Gastrocnemius medialis (tissue), 4 donors: ENCODE measurements at regions of chr20 and their contacts with region 1.

Region 1: GRCh38 chr20:44495802-44496481 is 20.3 kb downstream of the TTPAL start:
- DNase-seq: no peak
- ATAC-seq: peak; percentile 76 to 82
- H3K4me3 ChIP-seq: no peak overlapping the region
- H3K27ac ChIP-seq: peak overlapping the region; percentile 82 to 93 (median 91)
- H3K4me1 ChIP-seq: peaks cover 40 to 48% of the 10 kb centered on the region in 2 donors
- H3K27me3 ChIP-seq: no peaks in the 10 kb centered on the region
- CTCF ChIP-seq: no peak
- POLR2A ChIP-seq: no peak

Region 2: GRCh38 chr20:44481719-44482416 is 14.1 kb before region 1 on chr20:
- in situ Hi-C with region 1: no loop called
- intact Hi-C with region 1: loop called (anchors 1 kb)
- DNase-seq: no peak
- ATAC-seq: peak; percentile 66 to 84
- H3K4me3 ChIP-seq: no peak overlapping the region
- H3K27ac ChIP-seq: peak overlapping the region; percentile 33 to 77 (median 64)
- H3K4me1 ChIP-seq: peaks cover 0 to 17% of the 10 kb centered on the region in 2 donors
- H3K27me3 ChIP-seq: no peaks in the 10 kb centered on the region
- CTCF ChIP-seq: no peak
- POLR2A ChIP-seq: no peak

Region 3: GRCh38 chr20:44609511-44610312 is 113.8 kb after region 1 on chr20:
- in situ Hi-C with region 1: no loop called
- intact Hi-C with region 1: no loop called
- DNase-seq: peak; percentile 81 to 88
- ATAC-seq: peak; percentile 94
- H3K4me3 ChIP-seq: peak overlapping the region; percentile 35 to 44 (median 41)
- H3K27ac ChIP-seq: peak overlapping the region; percentile 88 to 93 (median 92)
- H3K4me1 ChIP-seq: peaks cover 35 to 43% of the 10 kb centered on the region in 2 donors
- H3K27me3 ChIP-seq: no peaks in the 10 kb centered on the region
- CTCF ChIP-seq: peak; percentile 96 to 99 (median 98)
- POLR2A ChIP-seq: no peak